ENCODE measurements at regions of chr6 and their contacts with region 1.

Region 1: GRCh38 chr6:158718461-158719046 is 68.7 kb downstream of the SYTL3 start:
- DNase-seq: no peak
- ATAC-seq: no peak
- H3K4me3 ChIP-seq: no peak overlapping the region
- H3K4me3 Mint-ChIP-seq: peak overlapping the region; percentile 16
- H3K27ac ChIP-seq: peak overlapping the region; percentile 86 to 90
- H3K27ac Mint-ChIP-seq: peak overlapping the region; percentile 96
- H3K4me1 ChIP-seq: peaks cover 54 to 71% of the 10 kb centered on the region in 2 donors
- H3K4me1 Mint-ChIP-seq: peaks cover 64% of the 10 kb centered on the region
- H3K27me3 ChIP-seq: no peaks in the 10 kb centered on the region
- H3K27me3 Mint-ChIP-seq: no peaks in the 10 kb centered on the region
- CTCF ChIP-seq: no peak

Region 2: DNA sequence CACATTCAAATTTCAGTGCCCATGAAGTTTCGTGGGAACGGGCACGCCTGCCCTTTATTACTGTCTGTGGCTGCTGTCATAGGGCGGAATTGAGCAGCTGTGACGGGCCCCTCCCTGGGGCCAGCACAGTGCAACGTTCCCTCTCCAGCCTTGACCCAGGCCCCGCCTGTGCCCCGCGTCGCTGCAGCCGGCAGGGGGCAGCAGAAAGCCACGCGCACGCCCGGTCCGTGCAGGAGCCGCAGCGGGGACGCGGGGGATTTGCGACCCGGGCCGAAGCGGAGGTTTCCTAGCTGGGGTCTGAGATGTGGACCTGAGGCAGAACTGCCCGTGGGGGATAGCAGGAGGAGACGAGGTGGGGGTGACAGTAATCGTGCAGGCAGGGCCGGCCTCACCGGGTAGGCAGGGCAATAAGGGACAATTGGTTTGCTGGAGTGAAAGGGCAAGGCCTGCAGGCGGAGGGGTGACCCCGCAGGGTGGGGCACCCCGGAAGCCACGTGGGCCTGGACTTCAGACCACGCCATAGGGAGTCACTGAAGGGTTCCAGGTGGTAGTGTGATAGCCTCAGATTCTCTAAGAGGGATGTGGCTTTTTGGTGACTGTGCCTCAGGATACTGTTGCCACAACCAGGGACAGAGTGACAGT is 14.3 kb before region 1 on chr6:
- CTCF ChIA-PET with region 1: interaction called, 17 read pairs
- POLR2A ChIA-PET with region 1: interaction called, 5 read pairs
- intact Hi-C with region 1: loop called (anchors 1 kb)
- DNase-seq: peak; percentile 90
- ATAC-seq: peak; percentile 98
- H3K4me3 ChIP-seq: peak overlapping the region in 4 of 5 experiments; percentile 33 to 59 (median 52)
- H3K4me3 Mint-ChIP-seq: peak overlapping the region; percentile 92
- H3K27ac ChIP-seq: peak overlapping the region in 1 of 2 donors; percentile 36
- H3K27ac Mint-ChIP-seq: peak overlapping the region; percentile 89
- H3K4me1 ChIP-seq: peaks cover 19 to 30% of the 10 kb centered on the region in 2 donors
- H3K4me1 Mint-ChIP-seq: peaks cover 27% of the 10 kb centered on the region
- H3K27me3 ChIP-seq: no peaks in the 10 kb centered on the region
- H3K27me3 Mint-ChIP-seq: no peaks in the 10 kb centered on the region
- CTCF ChIP-seq: peak; percentile 99

Region 3: GRCh38 chr6:158762787-158763433 is 44.4 kb after region 1 on chr6:
- CTCF ChIA-PET with region 1: interaction called, 5 read pairs
- POLR2A ChIA-PET with region 1: interaction called, 8 read pairs
- intact Hi-C with region 1: loop called (anchors 5 kb)
- DNase-seq: peak; percentile 63
- ATAC-seq: no peak
- H3K4me3 ChIP-seq: no peak overlapping the region
- H3K4me3 Mint-ChIP-seq: no peak overlapping the region
- H3K27ac ChIP-seq: no peak overlapping the region
- H3K27ac Mint-ChIP-seq: peak overlapping the region; percentile 71
- H3K4me1 ChIP-seq: no peaks in the 10 kb centered on the region
- H3K4me1 Mint-ChIP-seq: peaks cover 2% of the 10 kb centered on the region
- H3K27me3 ChIP-seq: no peaks in the 10 kb centered on the region
- H3K27me3 Mint-ChIP-seq: no peaks in the 10 kb centered on the region
- CTCF ChIP-seq: no peak

Region 4: GRCh38 chr6:158769771-158770432 is 51.3 kb after region 1 on chr6:
- CTCF ChIA-PET with region 1: interaction called, 5 read pairs
- POLR2A ChIA-PET with region 1: interaction called, 10 read pairs
- intact Hi-C with region 1: no loop called
- DNase-seq: no peak
- ATAC-seq: no peak
- H3K4me3 ChIP-seq: no peak overlapping the region
- H3K4me3 Mint-ChIP-seq: no peak overlapping the region
- H3K27ac ChIP-seq: no peak overlapping the region
- H3K27ac Mint-ChIP-seq: peak overlapping the region; percentile 76
- H3K4me1 ChIP-seq: no peaks in the 10 kb centered on the region
- H3K4me1 Mint-ChIP-seq: no peaks in the 10 kb centered on the region
- H3K27me3 ChIP-seq: no peaks in the 10 kb centered on the region
- H3K27me3 Mint-ChIP-seq: no peaks in the 10 kb centered on the region
- CTCF ChIP-seq: no peak

Region 5: GRCh38 chr6:159116343-159116742 is 397.8 kb after region 1 on chr6:
- CTCF ChIA-PET with region 1: no interaction called
- POLR2A ChIA-PET with region 1: no interaction called
- intact Hi-C with region 1: loop called (anchors 5 kb)
- DNase-seq: peak; percentile 93
- ATAC-seq: peak; percentile 84
- H3K4me3 ChIP-seq: peak overlapping the region in 2 of 5 experiments; percentile 0 to 48
- H3K4me3 Mint-ChIP-seq: peak overlapping the region; percentile 88
- H3K27ac ChIP-seq: peak overlapping the region; percentile 99
- H3K27ac Mint-ChIP-seq: peak overlapping the region; percentile 95
- H3K4me1 ChIP-seq: peaks cover 86 to 87% of the 10 kb centered on the region in 2 donors
- H3K4me1 Mint-ChIP-seq: peaks cover 87% of the 10 kb centered on the region
- H3K27me3 ChIP-seq: no peaks in the 10 kb centered on the region
- H3K27me3 Mint-ChIP-seq: no peaks in the 10 kb centered on the region
- CTCF ChIP-seq: no peak